Posterior vena cava (tissue), 2 donors: ENCODE measurements at regions of chr3 and their contacts with region 1.

Region 1: GRCh38 chr3:104878395-104878794 is 488.3 kb upstream of the ALCAM start:
- DNase-seq: no peak

Region 2: DNA sequence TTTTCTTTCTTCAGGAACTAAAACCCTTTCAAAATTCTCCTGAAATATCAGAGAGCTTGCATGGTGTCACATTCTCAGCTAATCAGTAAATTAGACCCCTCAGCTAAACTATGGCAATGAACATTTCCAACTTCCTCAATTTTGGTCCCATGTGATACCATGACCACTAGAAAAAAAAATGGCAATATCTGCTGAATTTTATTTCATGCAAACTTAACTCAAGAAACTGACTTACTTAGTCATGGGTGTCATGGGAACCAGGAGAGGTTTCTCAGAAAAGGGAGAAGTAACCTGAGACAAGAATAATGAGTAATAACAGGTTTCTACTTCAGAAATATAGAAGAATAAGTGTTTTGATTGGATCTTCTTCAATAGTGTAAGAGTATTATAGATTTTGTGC is 296.3 kb before region 1 on chr3:
- intact Hi-C with region 1: no loop called
- DNase-seq: no peak

Region 3: GRCh38 chr3:105691633-105692032 is 813.2 kb after region 1 on chr3:
- intact Hi-C with region 1: loop called in 1 of 2 experiments (anchors 5 kb)
- DNase-seq: no peak